Endothelial cell of umbilical vein (primary cell): ENCODE measurements at regions of chr22 and their contacts with region 1.

Region 1: DNA sequence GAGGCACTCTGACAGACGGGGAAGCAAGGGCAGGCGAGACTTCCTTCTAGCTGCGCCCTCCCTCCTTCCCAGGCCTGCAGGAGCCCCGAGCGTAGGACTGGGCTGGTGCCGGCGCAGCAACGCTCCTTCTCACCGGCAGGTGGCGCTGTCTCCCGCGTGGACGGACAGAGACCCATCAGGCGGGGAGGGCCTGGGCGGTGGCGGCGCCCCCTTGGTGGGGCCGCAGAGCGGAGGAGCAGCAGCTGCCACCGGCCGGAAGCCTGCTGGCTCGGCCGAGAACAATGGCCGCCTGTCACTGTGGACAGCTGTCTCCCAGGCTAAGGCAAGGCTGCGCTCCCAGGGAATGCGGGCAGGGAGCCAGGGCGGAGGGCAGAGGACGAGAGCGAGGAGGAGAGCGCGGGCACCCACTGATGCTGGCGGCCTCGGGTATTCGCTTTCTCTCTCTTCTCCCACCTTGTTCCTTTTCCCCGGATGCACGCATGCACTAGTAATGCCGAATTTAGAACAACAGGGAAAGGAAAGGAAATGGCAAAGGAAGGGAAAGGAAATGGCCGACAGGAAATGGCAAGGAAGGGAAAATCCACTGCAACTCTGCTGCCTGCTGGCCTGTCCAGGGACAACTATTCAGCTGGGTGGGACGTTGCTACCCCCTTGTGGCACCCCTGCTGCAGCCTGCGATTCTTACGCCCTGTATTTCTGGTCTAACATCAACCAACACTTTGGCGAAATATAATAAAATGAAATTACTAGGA is 14.4 kb downstream of the PPM1F start:
- DNase-seq: peak; percentile 95
- H3K4me3 ChIP-seq: no peak overlapping the region
- H3K27ac ChIP-seq: peak overlapping the region; percentile 86
- H3K4me1 ChIP-seq: peaks cover 60% of the 10 kb centered on the region
- H3K27me3 ChIP-seq: no peaks in the 10 kb centered on the region
- CTCF ChIP-seq: peak; percentile 99
- POLR2A ChIP-seq: no peak

Region 2: DNA sequence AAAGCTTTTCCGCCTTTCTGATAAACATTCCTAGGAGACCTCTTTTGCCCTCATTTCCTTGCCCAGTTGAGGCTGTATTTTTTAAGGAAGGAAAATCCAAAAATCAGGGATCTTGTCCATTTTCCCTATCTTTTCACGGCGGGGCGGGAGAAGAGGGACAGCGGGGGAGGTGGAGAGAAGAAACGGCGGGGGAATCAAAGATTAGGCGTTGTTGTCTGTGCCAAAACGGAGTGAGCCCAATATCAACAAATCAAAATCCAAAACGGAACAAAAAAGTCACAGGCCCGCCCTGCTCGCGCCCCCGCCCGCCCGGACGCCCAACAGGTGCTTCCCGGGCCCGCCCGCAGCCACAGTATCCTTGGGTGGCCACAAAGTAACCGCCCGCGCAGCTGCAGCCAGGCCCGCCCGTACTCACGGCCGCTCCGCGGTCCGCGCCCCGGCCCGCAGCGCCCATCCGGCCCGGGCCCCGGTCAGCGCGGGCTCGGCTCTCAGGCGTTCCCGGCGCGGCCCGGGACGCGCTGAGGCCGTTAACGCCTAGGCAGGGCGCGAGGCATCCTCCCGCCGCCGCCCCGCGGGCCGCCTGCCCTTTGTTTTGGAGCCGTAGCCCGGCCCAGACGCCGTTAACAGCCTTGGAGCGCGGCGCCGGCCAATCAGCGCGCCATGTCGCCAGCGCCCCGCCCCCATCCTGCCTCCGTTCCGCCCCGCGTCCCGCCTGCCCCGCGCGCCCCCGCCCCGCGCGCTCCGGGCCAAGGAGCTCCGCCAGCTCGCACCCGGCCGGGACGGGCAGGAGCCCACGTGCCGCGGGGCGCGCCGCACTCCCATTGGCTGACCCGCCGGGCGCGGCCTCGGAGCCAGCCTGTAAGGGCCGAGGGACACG is 202.8 kb before region 1 on chr22 and contains the start of gene YPEL1:
- CTCF ChIA-PET with region 1: no interaction called
- POLR2A ChIA-PET with region 1: no interaction called
- dilution Hi-C with region 1: no loop called
- intact Hi-C with region 1: loop called (anchors 2 kb)
- DNase-seq: peak; percentile 98
- H3K4me3 ChIP-seq: peak within 1 kb of the TSS; percentile 48 to 66 (median 52)
- H3K27ac ChIP-seq: no peak within 1 kb of the TSS
- H3K4me1 ChIP-seq: peaks cover 7% of the 10 kb centered on the region
- H3K27me3 ChIP-seq: peaks cover 0 to 7% of the 10 kb centered on the region in 2 experiments
- CTCF ChIP-seq: no peak
- POLR2A ChIP-seq: no peak
- total RNA-seq, gene YPEL1: 6.2 and 6.5 TPM in 2 replicates

Region 3: DNA sequence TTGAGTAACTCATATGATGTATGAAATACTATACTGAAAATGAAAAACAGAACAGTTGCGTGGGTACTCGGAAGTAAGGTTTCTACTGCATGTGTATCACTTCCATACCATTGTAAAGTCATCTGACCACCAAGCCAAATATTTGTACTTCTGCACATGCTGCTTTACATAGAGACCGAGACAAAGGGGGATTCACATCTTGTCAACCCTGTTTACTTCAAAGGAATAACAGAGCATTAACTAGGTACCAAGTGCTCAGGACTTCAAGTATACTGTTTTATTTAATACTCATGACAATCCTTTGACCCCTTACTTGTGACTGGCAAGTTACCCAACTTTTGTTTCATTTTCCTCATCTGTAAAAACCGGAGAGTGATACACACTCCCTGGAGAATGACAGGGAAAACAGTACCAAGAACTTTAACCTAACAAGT is 80.7 kb before region 1 on chr22:
- CTCF ChIA-PET with region 1: no interaction called
- POLR2A ChIA-PET with region 1: no interaction called
- dilution Hi-C with region 1: loop called (anchors 10 kb)
- intact Hi-C with region 1: no loop called
- DNase-seq: no peak
- H3K4me3 ChIP-seq: no peak overlapping the region
- H3K27ac ChIP-seq: no peak overlapping the region
- H3K4me1 ChIP-seq: no peaks in the 10 kb centered on the region
- H3K27me3 ChIP-seq: no peaks in the 10 kb centered on the region
- CTCF ChIP-seq: no peak
- POLR2A ChIP-seq: no peak

Region 4: DNA sequence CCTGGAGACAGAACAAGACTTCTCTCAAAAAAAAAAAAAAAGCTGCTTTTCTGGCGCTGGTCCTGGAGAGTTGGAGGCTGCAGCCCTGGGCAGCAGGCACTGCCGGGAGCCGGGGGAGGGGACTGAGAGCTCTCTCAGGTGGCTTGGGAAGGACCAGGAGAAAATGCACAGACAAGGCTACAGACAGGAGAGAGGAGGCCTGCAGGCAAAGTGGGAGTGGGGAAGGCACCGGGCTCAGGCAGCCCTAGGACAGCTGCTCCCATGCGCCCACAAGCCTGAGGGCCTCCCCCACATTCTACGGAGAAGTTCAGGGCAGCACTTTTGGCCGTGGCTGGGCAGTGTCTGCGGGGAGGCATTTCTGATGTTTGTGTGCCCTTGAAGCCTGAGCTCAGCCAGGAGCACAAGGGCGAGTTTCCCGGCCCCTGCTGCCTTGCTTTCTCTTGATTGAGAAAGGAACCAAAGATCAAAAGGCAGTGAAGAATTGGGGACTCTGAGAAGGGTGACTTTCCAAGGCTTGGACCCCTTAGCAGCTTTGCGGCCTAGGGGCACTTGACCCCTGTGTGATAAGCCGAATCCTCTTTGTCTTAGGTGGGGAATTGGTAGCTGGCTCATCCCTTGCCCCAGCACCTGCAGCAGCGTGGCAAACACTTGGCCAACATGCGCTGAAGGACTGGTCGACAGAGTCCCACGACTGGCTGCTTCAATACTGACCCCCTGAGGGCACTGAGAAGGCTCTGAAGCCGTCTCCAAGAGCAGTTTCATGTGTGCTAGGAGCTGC is 20.9 kb before region 1 on chr22:
- CTCF ChIA-PET with region 1: no interaction called
- POLR2A ChIA-PET with region 1: no interaction called
- dilution Hi-C with region 1: no loop called
- intact Hi-C with region 1: no loop called
- DNase-seq: no peak
- H3K4me3 ChIP-seq: no peak overlapping the region
- H3K27ac ChIP-seq: no peak overlapping the region
- H3K4me1 ChIP-seq: no peaks in the 10 kb centered on the region
- H3K27me3 ChIP-seq: no peaks in the 10 kb centered on the region
- CTCF ChIP-seq: no peak
- POLR2A ChIP-seq: no peak

Region 5: DNA sequence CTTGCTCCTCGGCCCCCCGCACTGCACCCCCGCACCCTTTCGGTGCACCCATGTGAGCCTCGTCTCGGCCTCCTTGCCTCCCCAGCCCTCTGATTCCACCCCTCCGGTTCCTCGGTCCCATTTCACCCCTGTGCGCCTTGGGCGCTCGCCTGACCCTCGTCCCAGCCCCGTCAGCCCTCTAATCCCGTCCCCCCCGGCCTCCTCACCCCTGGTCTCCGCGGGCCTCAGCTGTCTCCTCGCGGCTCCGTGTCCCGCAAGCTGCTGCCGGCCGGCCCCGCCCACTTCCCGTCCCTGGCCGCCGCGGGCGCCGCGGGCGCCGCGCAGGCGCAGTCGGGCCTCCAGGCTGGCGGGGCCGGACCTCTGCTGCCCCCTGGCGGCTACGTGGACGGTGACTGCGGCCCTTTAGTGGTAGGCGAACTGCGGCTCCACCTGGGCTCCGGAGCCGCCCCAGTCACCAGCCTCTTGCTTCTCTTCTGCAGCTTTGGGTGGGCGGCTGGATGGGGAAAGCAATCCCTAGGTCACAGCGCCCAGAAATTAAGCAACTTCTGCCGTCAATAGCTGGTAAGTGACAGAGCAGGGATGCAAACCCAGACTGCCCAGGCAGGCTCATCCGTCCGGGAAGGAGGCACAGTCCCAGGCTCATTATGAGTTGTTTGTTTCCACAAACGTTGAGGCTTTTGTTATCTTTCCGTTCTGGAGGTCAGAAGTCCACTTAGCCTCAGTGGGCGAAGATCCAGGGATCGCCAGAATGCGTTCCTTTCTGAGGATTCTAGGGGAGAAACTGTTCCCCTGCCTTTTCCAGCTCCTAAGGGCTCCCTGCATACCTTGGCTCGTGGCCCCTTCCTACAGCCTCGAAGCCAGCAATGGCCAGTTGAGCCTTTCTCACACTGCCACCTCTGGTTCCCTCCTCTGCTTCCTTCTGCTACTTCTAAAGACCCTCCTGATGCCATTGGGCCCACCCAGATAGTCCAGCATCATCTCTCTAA is 14.6 kb after region 1 on chr22 and contains the start of gene PPM1F:
- CTCF ChIA-PET with region 1: interaction called, 292 read pairs
- POLR2A ChIA-PET with region 1: no interaction called
- dilution Hi-C with region 1: no loop called
- intact Hi-C with region 1: loop called (anchors 1 kb)
- DNase-seq: peak; percentile 81
- H3K4me3 ChIP-seq: peak within 1 kb of the TSS; percentile 70 to 93 (median 89)
- H3K27ac ChIP-seq: peak within 1 kb of the TSS; percentile 73
- H3K4me1 ChIP-seq: peaks cover 40% of the 10 kb centered on the region
- H3K27me3 ChIP-seq: no peaks in the 10 kb centered on the region
- CTCF ChIP-seq: peak; percentile 86 to 93
- POLR2A ChIP-seq: peak; percentile 89
- total RNA-seq, gene PPM1F: 171 and 178 TPM in 2 replicates

Region 6: GRCh38 chr22:21982338-21982965 is 44.2 kb after region 1 on chr22 and contains the start of gene TOP3B:
- CTCF ChIA-PET with region 1: interaction called, 3 read pairs
- POLR2A ChIA-PET with region 1: no interaction called
- dilution Hi-C with region 1: no loop called
- intact Hi-C with region 1: loop called (anchors 5 kb)
- DNase-seq: peak; percentile 62
- H3K4me3 ChIP-seq: peak within 1 kb of the TSS; percentile 61 to 99 (median 91)
- H3K27ac ChIP-seq: peak within 1 kb of the TSS; percentile 40
- H3K4me1 ChIP-seq: peaks cover 8% of the 10 kb centered on the region
- H3K27me3 ChIP-seq: no peaks in the 10 kb centered on the region
- CTCF ChIP-seq: no peak
- POLR2A ChIP-seq: peak; percentile 89
- total RNA-seq, gene TOP3B: 49.9 and 56.5 TPM in 2 replicates